ENCODE measurements at regions of chr7 and their contacts with region 1.

Region 1: GRCh38 chr7:105759670-105760550 is 116.5 kb downstream of the ATXN7L1 start:
- DNase-seq: peak in 1 of 2 donors; percentile 30
- ATAC-seq: peak; percentile 71 to 87 (median 74)
- H3K4me3 ChIP-seq: no peak overlapping the region
- H3K27ac ChIP-seq: no peak overlapping the region
- H3K4me1 ChIP-seq: no peaks in the 10 kb centered on the region
- H3K27me3 ChIP-seq: no peaks in the 10 kb centered on the region
- CTCF ChIP-seq: peak; percentile 73

Region 2: DNA sequence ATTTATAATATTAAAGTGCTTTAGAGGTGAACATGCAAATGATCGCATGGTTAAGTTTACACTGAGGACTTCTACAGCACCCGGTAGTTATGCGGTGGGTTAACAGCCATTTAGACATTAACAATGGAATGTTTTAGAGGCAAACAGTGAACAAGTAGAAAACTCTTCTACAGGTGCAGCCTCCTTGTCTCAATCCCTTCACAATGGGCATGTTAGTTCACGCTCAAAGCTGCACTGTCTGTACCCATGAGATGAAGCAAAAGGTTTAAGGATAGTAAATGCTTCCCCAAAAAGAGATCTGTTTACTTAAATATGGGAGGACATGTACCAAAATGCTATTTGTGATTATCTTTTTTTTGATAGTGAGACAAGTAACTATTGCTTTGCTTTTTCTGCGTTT is 262.9 kb before region 1 on chr7:
- intact Hi-C with region 1: no loop called
- DNase-seq: no peak
- ATAC-seq: no peak
- H3K4me3 ChIP-seq: no peak overlapping the region
- H3K27ac ChIP-seq: no peak overlapping the region
- H3K4me1 ChIP-seq: no peaks in the 10 kb centered on the region
- H3K27me3 ChIP-seq: no peaks in the 10 kb centered on the region
- CTCF ChIP-seq: no peak

Region 3: GRCh38 chr7:105638902-105639495 is 120.9 kb before region 1 on chr7:
- intact Hi-C with region 1: no loop called
- DNase-seq: no peak
- ATAC-seq: no peak
- H3K4me3 ChIP-seq: no peak overlapping the region
- H3K27ac ChIP-seq: no peak overlapping the region
- H3K4me1 ChIP-seq: peaks cover 3% of the 10 kb centered on the region
- H3K27me3 ChIP-seq: no peaks in the 10 kb centered on the region
- CTCF ChIP-seq: no peak

Region 4: DNA sequence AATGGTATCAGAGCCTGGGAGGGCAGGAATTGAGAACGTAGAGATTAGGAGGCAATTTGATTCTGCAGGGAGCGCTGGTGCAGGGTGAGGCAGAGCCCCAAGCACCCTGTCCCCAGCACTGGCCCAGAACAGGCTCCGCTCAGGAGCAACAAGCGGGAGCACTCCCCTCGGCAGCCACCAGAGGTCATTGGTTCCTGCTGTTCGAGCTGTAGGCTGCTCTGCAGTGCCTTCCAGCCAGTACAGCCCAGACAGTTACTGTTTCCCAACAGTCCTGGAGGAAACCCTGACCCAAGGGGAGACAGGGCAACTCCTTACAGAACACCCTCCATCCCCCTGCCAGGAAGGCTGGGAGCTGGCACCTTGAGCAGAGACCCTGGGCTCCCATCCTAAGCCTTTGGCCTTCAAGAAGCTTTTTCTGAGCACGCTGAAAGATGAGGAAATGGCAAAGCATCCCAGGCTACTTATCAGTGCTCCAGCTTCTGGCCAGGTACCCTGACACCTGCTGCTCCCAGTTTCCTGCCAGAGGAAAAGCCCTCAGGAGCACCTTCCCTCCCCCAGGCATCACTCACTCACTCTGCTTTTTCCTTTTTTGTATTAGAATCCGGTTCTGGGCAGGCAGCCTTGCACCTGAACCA is 107.4 kb before region 1 on chr7:
- intact Hi-C with region 1: loop called in 1 of 2 experiments (anchors 5 kb)
- DNase-seq: peak; percentile 77 to 89
- ATAC-seq: peak; percentile 91 to 95 (median 93)
- H3K4me3 ChIP-seq: no peak overlapping the region
- H3K27ac ChIP-seq: no peak overlapping the region
- H3K4me1 ChIP-seq: peaks cover 28% of the 10 kb centered on the region
- H3K27me3 ChIP-seq: no peaks in the 10 kb centered on the region
- CTCF ChIP-seq: peak; percentile 91

Region 5: GRCh38 chr7:105743351-105744090 is 16.4 kb before region 1 on chr7:
- intact Hi-C with region 1: no loop called
- DNase-seq: no peak
- ATAC-seq: no peak
- H3K4me3 ChIP-seq: no peak overlapping the region
- H3K27ac ChIP-seq: no peak overlapping the region
- H3K4me1 ChIP-seq: no peaks in the 10 kb centered on the region
- H3K27me3 ChIP-seq: no peaks in the 10 kb centered on the region
- CTCF ChIP-seq: no peak

Region 6: DNA sequence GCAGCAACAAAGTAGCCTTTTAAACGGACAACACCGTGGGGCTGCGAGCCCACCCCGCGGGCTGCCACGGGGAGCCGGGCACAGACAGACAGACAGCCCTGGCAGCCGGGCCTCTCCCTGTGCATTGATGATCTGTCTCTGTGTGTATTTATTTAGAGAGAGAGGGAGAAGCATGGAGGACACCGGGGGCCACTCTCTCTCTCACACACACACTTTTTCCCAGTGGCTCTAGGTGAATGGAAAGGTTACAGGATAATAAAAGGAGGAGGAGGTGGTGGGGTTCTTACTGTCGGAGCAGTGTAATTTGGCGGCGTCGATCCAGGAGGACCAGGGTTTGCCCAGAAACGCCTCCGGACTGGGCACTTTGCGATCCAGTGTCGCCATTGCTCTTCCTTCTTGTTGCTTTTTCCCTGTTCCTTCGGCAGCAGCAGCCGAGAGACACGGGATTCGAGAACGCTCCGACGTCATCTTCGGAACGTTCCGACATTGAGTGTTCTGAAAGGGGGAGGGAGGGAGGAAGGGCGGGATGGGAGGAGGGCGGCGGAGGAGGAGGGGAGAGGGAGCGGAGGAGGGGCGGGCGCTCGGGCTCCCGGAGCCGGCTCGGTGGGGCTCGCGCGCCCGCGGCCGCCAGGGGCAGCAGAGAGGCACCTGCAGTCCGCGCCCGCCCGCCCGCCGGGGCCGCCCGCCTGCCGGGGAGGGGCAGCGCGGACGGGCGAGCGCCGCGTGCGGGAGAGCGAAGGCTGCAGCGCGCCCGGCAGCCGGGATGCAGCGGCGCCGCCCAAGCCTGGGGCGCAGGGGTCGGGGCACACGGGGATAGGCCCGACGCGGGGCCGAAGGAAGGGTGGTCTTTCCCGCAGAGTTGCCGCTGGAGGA is 116.4 kb after region 1 on chr7 and contains the start of gene ATXN7L1:
- intact Hi-C with region 1: loop called in 1 of 2 experiments (anchors 5 kb)
- DNase-seq: peak; percentile 94 to 97
- ATAC-seq: peak; percentile 94 to 99 (median 98)
- H3K4me3 ChIP-seq: peak within 1 kb of the TSS; percentile 84
- H3K27ac ChIP-seq: peak within 1 kb of the TSS; percentile 84
- H3K4me1 ChIP-seq: no peaks in the 10 kb centered on the region
- H3K27me3 ChIP-seq: no peaks in the 10 kb centered on the region
- CTCF ChIP-seq: peak; percentile 82
- total RNA-seq, gene ATXN7L1: 3.0 to 6.0 (median 4.0) TPM

Region 7: DNA sequence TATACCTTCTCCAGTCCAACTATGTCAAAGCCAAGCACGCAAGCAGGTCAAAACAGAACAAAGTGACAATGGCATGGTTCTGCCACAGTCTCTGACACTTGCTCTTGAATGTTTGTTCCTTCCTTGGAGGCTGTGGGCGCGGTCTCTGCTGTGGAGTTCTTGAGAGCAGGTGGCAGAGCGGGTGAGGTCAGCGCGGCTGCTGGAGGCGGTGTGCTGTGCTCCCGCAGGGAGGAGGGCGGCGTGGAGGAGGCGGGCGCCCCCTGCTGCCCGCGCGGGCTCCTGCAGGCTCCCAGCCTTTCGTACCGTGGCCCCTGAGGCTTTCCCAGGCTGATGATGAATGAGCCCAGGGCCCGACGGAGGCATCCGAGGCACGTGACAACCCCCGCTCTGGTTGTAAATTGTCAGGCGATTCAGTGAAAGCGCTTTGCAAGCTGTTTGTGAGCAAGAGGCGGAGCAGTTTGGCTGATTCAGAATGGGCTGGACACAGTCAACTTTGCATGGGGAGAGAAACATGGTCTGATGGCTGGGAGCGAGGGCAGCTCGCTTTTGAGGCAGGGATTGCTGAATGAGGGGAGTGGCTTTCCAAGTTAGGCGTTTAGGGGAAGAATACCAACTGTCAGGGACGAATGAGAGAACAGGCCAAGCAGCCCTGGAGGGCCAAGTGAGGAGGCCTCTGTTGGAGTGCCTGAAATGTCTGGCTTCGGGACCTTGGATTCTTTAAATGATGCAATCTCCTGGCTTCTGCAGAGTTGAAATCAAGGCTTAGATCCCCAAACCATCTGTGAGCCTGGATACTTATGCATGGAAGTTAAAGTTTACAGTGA is 249.7 kb after region 1 on chr7:
- intact Hi-C with region 1: loop called (anchors 1 to 2 kb)
- DNase-seq: peak; percentile 82 to 90
- ATAC-seq: peak; percentile 97 to 99 (median 98)
- H3K4me3 ChIP-seq: no peak overlapping the region
- H3K27ac ChIP-seq: no peak overlapping the region
- H3K4me1 ChIP-seq: peaks cover 6% of the 10 kb centered on the region
- H3K27me3 ChIP-seq: no peaks in the 10 kb centered on the region
- CTCF ChIP-seq: peak; percentile 97

Region 8: DNA sequence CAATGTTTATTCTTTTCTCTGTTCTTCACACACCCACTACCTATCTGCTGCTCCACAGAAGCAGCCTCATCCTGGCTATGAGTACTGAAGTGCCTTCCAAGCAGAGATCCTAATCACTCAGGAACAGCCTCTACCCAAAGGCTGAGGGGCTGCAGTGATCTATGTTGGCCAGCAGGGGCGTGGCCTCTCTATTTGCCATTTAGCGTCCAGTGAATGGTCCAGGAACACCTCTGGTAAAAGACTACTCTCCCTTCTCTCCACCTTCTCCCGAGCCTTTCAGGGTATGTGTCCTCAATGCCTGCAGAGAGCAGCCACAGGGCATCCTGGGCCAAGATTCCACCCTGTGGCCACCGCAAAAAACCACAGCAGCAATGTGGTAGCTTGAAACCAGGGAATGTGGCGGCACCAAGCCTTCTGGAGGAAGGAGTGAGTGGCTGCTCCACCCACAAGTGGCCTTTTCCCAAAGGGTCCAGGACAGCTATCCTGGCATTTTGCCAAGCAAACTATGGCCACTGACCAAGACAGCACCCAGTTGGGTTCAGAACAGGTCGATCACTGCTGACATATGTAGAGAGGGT is 281.3 kb after region 1 on chr7:
- intact Hi-C with region 1: loop called (anchors 1 to 2 kb)
- DNase-seq: no peak
- ATAC-seq: peak in 3 of 4 donors; percentile 51 to 65 (median 61)
- H3K4me3 ChIP-seq: no peak overlapping the region
- H3K27ac ChIP-seq: no peak overlapping the region
- H3K4me1 ChIP-seq: peaks cover 10% of the 10 kb centered on the region
- H3K27me3 ChIP-seq: no peaks in the 10 kb centered on the region
- CTCF ChIP-seq: peak; percentile 62

Region 9: GRCh38 chr7:106153891-106154449 is 394.1 kb after region 1 on chr7:
- intact Hi-C with region 1: loop called (anchors 2 to 10 kb)
- DNase-seq: peak; percentile 79 to 91
- ATAC-seq: peak; percentile 96 to 100 (median 98)
- H3K4me3 ChIP-seq: peak overlapping the region; percentile 34
- H3K27ac ChIP-seq: no peak overlapping the region
- H3K4me1 ChIP-seq: peaks cover 10% of the 10 kb centered on the region
- H3K27me3 ChIP-seq: no peaks in the 10 kb centered on the region
- CTCF ChIP-seq: peak; percentile 96

Region 10: GRCh38 chr7:106176414-106177299 is 416.7 kb after region 1 on chr7:
- intact Hi-C with region 1: no loop called
- DNase-seq: peak; percentile 85 to 88
- ATAC-seq: peak; percentile 89 to 96 (median 94)
- H3K4me3 ChIP-seq: no peak overlapping the region
- H3K27ac ChIP-seq: peak overlapping the region; percentile 78
- H3K4me1 ChIP-seq: peaks cover 28% of the 10 kb centered on the region
- H3K27me3 ChIP-seq: no peaks in the 10 kb centered on the region
- CTCF ChIP-seq: peak; percentile 94

Measured in psoas muscle (tissue), 8 donors.